B cell (primary cell): ENCODE measurements at regions of chr3 and their contacts with region 1.

Region 1: GRCh38 chr3:191244242-191244867 is 45.3 kb downstream of the OSTN start:
- DNase-seq: peak; percentile 56
- ATAC-seq: no peak
- H3K4me3 ChIP-seq: no peak overlapping the region
- H3K4me3 Mint-ChIP-seq: no peak overlapping the region
- H3K27ac ChIP-seq: peak overlapping the region; percentile 70 to 73
- H3K27ac Mint-ChIP-seq: no peak overlapping the region
- H3K4me1 ChIP-seq: peaks cover 20% of the 10 kb centered on the region in 2 donors
- H3K4me1 Mint-ChIP-seq: peaks cover 34% of the 10 kb centered on the region
- H3K27me3 ChIP-seq: no peaks in the 10 kb centered on the region
- H3K27me3 Mint-ChIP-seq: no peaks in the 10 kb centered on the region
- CTCF ChIP-seq: peak; percentile 85

Region 2: GRCh38 chr3:190456770-190457169 is 787.6 kb before region 1 on chr3:
- CTCF ChIA-PET with region 1: no interaction called
- POLR2A ChIA-PET with region 1: no interaction called
- intact Hi-C with region 1: no loop called
- DNase-seq: no peak
- ATAC-seq: no peak
- H3K4me3 ChIP-seq: no peak overlapping the region
- H3K4me3 Mint-ChIP-seq: no peak overlapping the region
- H3K27ac ChIP-seq: no peak overlapping the region
- H3K27ac Mint-ChIP-seq: no peak overlapping the region
- H3K4me1 ChIP-seq: no peaks in the 10 kb centered on the region
- H3K4me1 Mint-ChIP-seq: no peaks in the 10 kb centered on the region
- H3K27me3 ChIP-seq: no peaks in the 10 kb centered on the region
- H3K27me3 Mint-ChIP-seq: peaks cover 6% of the 10 kb centered on the region
- CTCF ChIP-seq: no peak

Region 3: GRCh38 chr3:191296041-191296541 is 51.7 kb after region 1 on chr3:
- CTCF ChIA-PET with region 1: interaction called, 23 read pairs
- POLR2A ChIA-PET with region 1: interaction called, 6 read pairs
- intact Hi-C with region 1: loop called (anchors 1 kb)
- DNase-seq: peak; percentile 86
- ATAC-seq: peak; percentile 86
- H3K4me3 ChIP-seq: peak overlapping the region in 1 of 5 experiments; percentile 22
- H3K4me3 Mint-ChIP-seq: no peak overlapping the region
- H3K27ac ChIP-seq: peak overlapping the region; percentile 63 to 75
- H3K27ac Mint-ChIP-seq: no peak overlapping the region
- H3K4me1 ChIP-seq: peaks cover 84% of the 10 kb centered on the region in 2 donors
- H3K4me1 Mint-ChIP-seq: peaks cover 50% of the 10 kb centered on the region
- H3K27me3 ChIP-seq: no peaks in the 10 kb centered on the region
- H3K27me3 Mint-ChIP-seq: no peaks in the 10 kb centered on the region
- CTCF ChIP-seq: no peak

Region 4: DNA sequence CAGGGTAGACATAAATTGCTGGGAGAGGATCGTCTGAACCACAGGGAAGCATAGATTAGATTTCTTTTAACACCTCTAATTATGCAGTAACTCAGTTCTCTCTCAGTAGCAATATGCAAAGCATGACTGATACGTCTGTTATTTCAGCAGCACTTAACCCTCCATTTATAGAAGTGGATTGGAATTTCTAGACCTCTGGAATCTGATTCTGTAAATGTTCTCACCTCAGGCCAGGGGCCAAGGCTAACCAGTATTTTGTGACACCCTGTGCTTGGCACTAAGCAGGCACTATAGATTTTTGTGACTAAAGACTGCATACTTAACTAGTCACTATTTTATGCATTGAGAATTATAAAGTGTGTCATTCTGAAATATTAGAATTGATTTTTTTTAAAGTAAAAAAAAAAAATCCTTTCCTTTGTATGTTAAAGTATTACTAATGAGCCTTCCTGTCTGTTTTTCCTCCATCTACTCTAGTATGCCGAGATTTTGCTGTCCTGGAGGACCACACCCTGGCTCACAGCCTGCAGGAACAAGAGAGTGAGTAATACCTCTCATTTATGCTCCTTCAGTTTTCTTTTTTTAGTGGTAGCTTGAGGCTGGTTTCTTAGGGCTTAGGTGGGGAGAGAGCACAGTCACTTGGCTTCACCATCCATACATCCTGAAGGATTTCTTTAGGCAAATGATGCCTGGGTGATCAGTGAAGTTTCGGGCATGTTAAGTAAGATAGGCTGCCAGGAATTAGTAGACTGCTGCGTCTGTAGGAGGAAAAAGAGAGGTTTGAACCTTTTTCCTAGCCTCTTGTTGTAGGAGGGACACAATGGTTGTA is 112.5 kb after region 1 on chr3:
- CTCF ChIA-PET with region 1: interaction called, 10 read pairs
- POLR2A ChIA-PET with region 1: interaction called, 5 read pairs
- intact Hi-C with region 1: no loop called
- DNase-seq: no peak
- ATAC-seq: no peak
- H3K4me3 ChIP-seq: no peak overlapping the region
- H3K4me3 Mint-ChIP-seq: peak overlapping the region; percentile 8
- H3K27ac ChIP-seq: peak overlapping the region in 1 of 2 donors; percentile 70
- H3K27ac Mint-ChIP-seq: peak overlapping the region; percentile 78
- H3K4me1 ChIP-seq: peaks cover 38 to 40% of the 10 kb centered on the region in 2 donors
- H3K4me1 Mint-ChIP-seq: peaks cover 58% of the 10 kb centered on the region
- H3K27me3 ChIP-seq: no peaks in the 10 kb centered on the region
- H3K27me3 Mint-ChIP-seq: no peaks in the 10 kb centered on the region
- CTCF ChIP-seq: no peak

Region 5: GRCh38 chr3:191383124-191383523 is 138.8 kb after region 1 on chr3:
- CTCF ChIA-PET with region 1: interaction called, 20 read pairs
- POLR2A ChIA-PET with region 1: no interaction called
- intact Hi-C with region 1: loop called (anchors 1 kb)
- DNase-seq: no peak
- ATAC-seq: no peak
- H3K4me3 ChIP-seq: no peak overlapping the region
- H3K4me3 Mint-ChIP-seq: no peak overlapping the region
- H3K27ac ChIP-seq: no peak overlapping the region
- H3K27ac Mint-ChIP-seq: peak overlapping the region; percentile 7
- H3K4me1 ChIP-seq: peaks cover 23 to 28% of the 10 kb centered on the region in 2 donors
- H3K4me1 Mint-ChIP-seq: peaks cover 30% of the 10 kb centered on the region
- H3K27me3 ChIP-seq: no peaks in the 10 kb centered on the region
- H3K27me3 Mint-ChIP-seq: no peaks in the 10 kb centered on the region
- CTCF ChIP-seq: no peak